ENCODE measurements at regions of chr20 and their contacts with region 1.

Region 1: DNA sequence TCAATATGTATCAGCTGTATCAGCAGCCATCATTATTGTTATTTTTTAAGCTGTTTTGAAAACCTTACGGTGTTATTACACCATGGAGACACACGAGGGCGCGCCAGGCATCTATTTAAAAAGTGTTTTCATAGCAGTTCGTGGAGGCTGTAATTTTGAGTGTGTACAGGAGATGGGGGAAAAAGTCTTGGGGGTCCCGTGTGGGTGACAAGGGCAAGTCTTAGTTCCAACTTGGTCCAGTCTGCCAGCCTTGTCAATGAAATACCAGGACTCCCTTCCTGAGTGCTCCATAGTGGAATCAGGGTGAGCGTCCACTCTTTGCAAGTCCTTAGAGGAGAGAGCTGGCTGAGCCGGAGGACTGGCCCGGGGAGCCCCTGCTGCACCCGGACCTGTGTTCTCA is 43.3 kb downstream of the SLC2A10 start:
- DNase-seq: peak; percentile 68
- H3K27ac ChIP-seq: no peak overlapping the region
- CTCF ChIP-seq: peak; percentile 95

Region 2: DNA sequence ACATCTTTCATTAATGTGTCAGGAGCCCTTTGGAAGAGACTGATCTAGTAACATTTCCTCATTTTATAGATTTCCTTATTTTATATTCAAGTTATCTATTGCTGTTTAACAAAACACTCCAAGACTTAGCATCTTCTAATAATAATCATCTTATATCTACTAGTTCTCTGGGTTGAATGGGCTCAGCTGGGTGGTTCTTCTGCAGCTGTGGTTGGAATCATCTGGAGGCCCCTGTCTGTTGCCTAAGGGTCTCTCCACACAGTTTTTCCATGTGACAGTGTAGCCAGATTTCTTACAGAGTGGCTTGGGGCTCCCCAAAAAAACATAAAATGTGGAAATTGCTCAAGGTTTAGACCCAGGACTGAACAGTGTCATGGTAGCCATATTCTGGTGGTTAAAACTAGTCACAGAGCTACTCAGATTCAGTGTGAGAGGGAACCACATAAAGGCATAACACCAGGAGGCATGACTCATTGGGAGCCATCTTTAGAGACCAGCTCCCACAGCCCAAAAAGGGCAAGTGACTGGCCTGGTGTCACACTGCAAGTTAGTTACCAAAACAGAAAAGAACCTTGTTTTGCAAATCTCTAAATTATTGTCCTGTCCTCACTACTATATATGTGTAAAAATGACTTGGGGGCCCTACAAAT is 31.8 kb before region 1 on chr20:
- CTCF ChIA-PET with region 1: interaction called, 12 read pairs
- POLR2A ChIA-PET with region 1: no interaction called
- DNase-seq: no peak
- H3K27ac ChIP-seq: no peak overlapping the region
- CTCF ChIP-seq: no peak

Measured in RWPE1 (cell line).